Activated CD8-positive, alpha-beta T cell treated with anti-CD3 and anti-CD28 coated beads, Interleukin-2, amount 10 ng/mL, durations not matched to agents 7 days and 5 days (primary cell): ENCODE measurements at regions of chr12 and their contacts with region 1.

Region 1: GRCh38 chr12:47767216-47767724 is 5.8 kb upstream of the SLC48A1 start:
- DNase-seq: peak; percentile 85
- ATAC-seq: peak; percentile 87
- H3K4me3 Mint-ChIP-seq: no peak overlapping the region
- H3K27ac Mint-ChIP-seq: no peak overlapping the region
- H3K4me1 Mint-ChIP-seq: peaks cover 28% of the 10 kb centered on the region
- H3K27me3 Mint-ChIP-seq: peaks cover 7% of the 10 kb centered on the region

Region 2: GRCh38 chr12:47651368-47652254 is 115.7 kb before region 1 on chr12:
- CTCF ChIA-PET with region 1: interaction called, 12 read pairs
- POLR2A ChIA-PET with region 1: no interaction called
- DNase-seq: peak; percentile 65
- ATAC-seq: peak; percentile 89
- H3K4me3 Mint-ChIP-seq: no peak overlapping the region
- H3K27ac Mint-ChIP-seq: peak overlapping the region; percentile 39
- H3K4me1 Mint-ChIP-seq: peaks cover 12% of the 10 kb centered on the region
- H3K27me3 Mint-ChIP-seq: no peaks in the 10 kb centered on the region

Region 3: DNA sequence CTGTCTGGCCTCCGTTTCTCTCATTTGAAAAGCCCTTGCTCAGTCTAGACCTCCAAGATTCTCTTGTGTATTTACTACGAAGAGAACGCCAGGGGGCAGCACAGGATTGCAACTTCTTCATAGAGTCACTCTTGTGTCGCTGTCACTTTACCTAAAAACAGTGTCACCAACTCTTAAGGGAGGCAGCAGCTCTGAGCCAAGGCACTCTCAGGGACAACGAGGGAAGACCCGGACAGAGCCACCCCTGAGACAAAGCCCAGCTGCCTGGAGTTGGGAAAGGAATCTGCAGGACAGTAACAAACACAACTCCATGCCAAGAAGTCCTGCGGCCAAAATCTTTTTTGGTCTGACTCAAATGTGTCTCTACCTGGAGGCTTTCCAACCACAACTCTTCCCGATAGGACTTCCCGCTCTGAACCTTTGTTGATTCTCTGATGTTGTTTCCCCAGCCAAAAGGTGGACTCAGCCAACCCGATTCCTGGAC is 51.8 kb before region 1 on chr12:
- CTCF ChIA-PET with region 1: interaction called, 157 read pairs
- POLR2A ChIA-PET with region 1: no interaction called
- DNase-seq: peak; percentile 90
- ATAC-seq: peak; percentile 88
- H3K4me3 Mint-ChIP-seq: no peak overlapping the region
- H3K27ac Mint-ChIP-seq: peak overlapping the region; percentile 37
- H3K4me1 Mint-ChIP-seq: peaks cover 37% of the 10 kb centered on the region
- H3K27me3 Mint-ChIP-seq: no peaks in the 10 kb centered on the region

Region 4: DNA sequence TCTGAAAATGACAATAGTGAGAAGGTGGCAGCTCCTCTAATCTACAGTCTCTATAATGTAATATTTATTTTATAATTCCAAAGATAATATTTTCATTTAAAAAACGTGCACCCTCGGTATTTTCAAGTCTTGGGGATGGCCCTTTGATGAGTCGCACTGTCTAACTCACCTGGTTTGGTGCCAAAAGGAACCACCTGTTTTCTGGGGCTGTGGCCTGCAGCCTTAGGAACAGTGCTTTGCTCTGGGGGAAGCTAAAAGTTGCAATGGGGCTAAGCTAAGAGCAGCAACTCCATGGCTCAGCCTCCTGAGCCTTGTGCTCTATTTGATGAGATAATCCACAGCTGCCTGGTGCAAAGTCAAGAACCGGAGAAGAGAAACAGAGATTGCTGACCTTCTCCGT is 35.5 kb before region 1 on chr12:
- CTCF ChIA-PET with region 1: interaction called, 26 read pairs
- POLR2A ChIA-PET with region 1: no interaction called
- DNase-seq: no peak
- ATAC-seq: no peak
- H3K4me3 Mint-ChIP-seq: no peak overlapping the region
- H3K27ac Mint-ChIP-seq: no peak overlapping the region
- H3K4me1 Mint-ChIP-seq: no peaks in the 10 kb centered on the region
- H3K27me3 Mint-ChIP-seq: no peaks in the 10 kb centered on the region

Region 5: GRCh38 chr12:47779301-47779942 is 12.2 kb after region 1 on chr12:
- CTCF ChIA-PET with region 1: interaction called, 101 read pairs
- POLR2A ChIA-PET with region 1: interaction called, 4 read pairs
- DNase-seq: peak; percentile 94
- ATAC-seq: peak; percentile 91
- H3K4me3 Mint-ChIP-seq: no peak overlapping the region
- H3K27ac Mint-ChIP-seq: peak overlapping the region; percentile 47
- H3K4me1 Mint-ChIP-seq: peaks cover 44% of the 10 kb centered on the region
- H3K27me3 Mint-ChIP-seq: no peaks in the 10 kb centered on the region